ENCODE measurements at regions of chr2 and their contacts with region 1.

Region 1: GRCh38 chr2:65746931-65747675 is 314.7 kb upstream of the SPRED2 start:
- DNase-seq: peak; percentile 82
- H3K4me3 ChIP-seq: no peak overlapping the region
- H3K27ac ChIP-seq: peak overlapping the region; percentile 100
- H3K4me1 ChIP-seq: peaks cover 62% of the 10 kb centered on the region
- H3K27me3 ChIP-seq: no peaks in the 10 kb centered on the region
- CTCF ChIP-seq: no peak

Region 2: DNA sequence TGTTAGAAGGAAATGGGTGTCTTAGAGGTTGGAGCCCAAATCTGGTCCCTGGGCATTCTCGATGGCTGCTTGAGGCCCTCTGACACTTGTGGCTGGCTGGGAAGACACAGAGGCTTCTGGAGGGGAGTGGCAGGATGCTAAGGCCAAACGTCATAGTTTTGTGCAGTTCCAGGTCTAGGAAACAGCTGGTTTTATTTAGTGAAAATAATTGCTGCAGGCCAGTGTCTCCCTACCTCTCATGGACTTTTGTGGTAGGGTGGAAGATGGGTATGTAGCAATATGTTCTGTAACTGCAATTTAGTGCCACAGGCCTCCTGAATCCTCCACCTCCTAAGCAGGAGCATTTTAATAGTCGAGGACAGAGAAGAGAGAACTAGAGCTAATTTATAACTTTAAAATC is 282.5 kb before region 1 on chr2:
- CTCF ChIA-PET with region 1: no interaction called
- POLR2A ChIA-PET with region 1: no interaction called
- intact Hi-C with region 1: loop called (anchors 5 kb)
- DNase-seq: peak; percentile 68
- H3K4me3 ChIP-seq: no peak overlapping the region
- H3K27ac ChIP-seq: peak overlapping the region; percentile 71
- H3K4me1 ChIP-seq: peaks cover 31% of the 10 kb centered on the region
- H3K27me3 ChIP-seq: no peaks in the 10 kb centered on the region
- CTCF ChIP-seq: no peak

Region 3: DNA sequence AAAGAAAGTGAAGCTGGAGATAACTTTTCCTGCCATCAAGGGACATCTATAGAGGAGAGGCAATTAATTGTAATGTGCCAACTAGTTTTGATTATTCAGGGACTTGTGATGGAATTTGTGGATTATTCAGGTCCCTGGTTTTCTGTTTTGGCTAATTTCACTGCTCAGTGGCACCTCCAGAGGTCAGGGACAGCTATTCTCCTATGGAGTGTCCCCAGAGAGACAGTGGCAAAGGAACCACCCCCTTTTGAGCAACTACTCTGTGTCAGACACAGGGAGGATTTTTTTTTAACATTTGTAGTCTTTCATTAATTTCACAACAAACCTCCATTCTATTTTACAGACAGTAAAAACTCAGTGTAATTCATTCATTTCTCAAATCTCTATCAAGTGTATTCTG is 108.7 kb before region 1 on chr2:
- CTCF ChIA-PET with region 1: interaction called, 9 read pairs
- POLR2A ChIA-PET with region 1: interaction called, 5 read pairs
- intact Hi-C with region 1: loop called (anchors 1 kb)
- DNase-seq: peak; percentile 77
- H3K4me3 ChIP-seq: no peak overlapping the region
- H3K27ac ChIP-seq: peak overlapping the region; percentile 84
- H3K4me1 ChIP-seq: peaks cover 60% of the 10 kb centered on the region
- H3K27me3 ChIP-seq: no peaks in the 10 kb centered on the region
- CTCF ChIP-seq: peak; percentile 46

Region 4: GRCh38 chr2:65662654-65663432 is 84.3 kb before region 1 on chr2:
- CTCF ChIA-PET with region 1: no interaction called
- POLR2A ChIA-PET with region 1: no interaction called
- intact Hi-C with region 1: loop called (anchors 2 kb)
- DNase-seq: peak; percentile 94
- H3K4me3 ChIP-seq: peak overlapping the region; percentile 29
- H3K27ac ChIP-seq: peak overlapping the region; percentile 94
- H3K4me1 ChIP-seq: peaks cover 59% of the 10 kb centered on the region
- H3K27me3 ChIP-seq: no peaks in the 10 kb centered on the region
- CTCF ChIP-seq: no peak

Region 5: DNA sequence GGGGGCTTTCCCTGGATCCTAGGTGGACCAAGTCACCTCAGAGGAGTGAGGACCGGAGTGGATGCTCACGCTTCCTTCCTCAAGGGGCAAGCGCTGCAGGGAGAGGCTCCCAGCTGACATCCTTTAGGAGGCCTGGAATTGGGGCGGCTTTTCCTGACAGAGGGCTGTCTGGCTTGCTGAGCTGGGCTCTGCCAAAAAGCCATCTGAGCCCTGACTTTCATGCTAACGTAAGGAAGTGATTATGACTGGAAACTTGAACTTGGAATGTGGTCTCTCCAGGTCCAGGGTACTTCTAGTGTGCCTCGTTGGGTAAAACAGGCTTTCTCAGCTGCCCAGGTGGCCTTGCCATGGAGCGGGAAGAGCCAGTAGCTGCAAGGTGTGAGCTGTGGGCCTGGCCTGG is 46.4 kb before region 1 on chr2:
- CTCF ChIA-PET with region 1: no interaction called
- POLR2A ChIA-PET with region 1: no interaction called
- intact Hi-C with region 1: no loop called
- DNase-seq: no peak
- H3K4me3 ChIP-seq: no peak overlapping the region
- H3K27ac ChIP-seq: no peak overlapping the region
- H3K4me1 ChIP-seq: no peaks in the 10 kb centered on the region
- H3K27me3 ChIP-seq: no peaks in the 10 kb centered on the region
- CTCF ChIP-seq: no peak

Region 6: GRCh38 chr2:65799141-65799854 is 52.2 kb after region 1 on chr2:
- CTCF ChIA-PET with region 1: interaction called, 3 read pairs
- POLR2A ChIA-PET with region 1: interaction called, 8 read pairs
- intact Hi-C with region 1: loop called (anchors 1 kb)
- DNase-seq: no peak
- H3K4me3 ChIP-seq: no peak overlapping the region
- H3K27ac ChIP-seq: peak overlapping the region; percentile 12
- H3K4me1 ChIP-seq: peaks cover 43% of the 10 kb centered on the region
- H3K27me3 ChIP-seq: no peaks in the 10 kb centered on the region
- CTCF ChIP-seq: no peak

Region 7: DNA sequence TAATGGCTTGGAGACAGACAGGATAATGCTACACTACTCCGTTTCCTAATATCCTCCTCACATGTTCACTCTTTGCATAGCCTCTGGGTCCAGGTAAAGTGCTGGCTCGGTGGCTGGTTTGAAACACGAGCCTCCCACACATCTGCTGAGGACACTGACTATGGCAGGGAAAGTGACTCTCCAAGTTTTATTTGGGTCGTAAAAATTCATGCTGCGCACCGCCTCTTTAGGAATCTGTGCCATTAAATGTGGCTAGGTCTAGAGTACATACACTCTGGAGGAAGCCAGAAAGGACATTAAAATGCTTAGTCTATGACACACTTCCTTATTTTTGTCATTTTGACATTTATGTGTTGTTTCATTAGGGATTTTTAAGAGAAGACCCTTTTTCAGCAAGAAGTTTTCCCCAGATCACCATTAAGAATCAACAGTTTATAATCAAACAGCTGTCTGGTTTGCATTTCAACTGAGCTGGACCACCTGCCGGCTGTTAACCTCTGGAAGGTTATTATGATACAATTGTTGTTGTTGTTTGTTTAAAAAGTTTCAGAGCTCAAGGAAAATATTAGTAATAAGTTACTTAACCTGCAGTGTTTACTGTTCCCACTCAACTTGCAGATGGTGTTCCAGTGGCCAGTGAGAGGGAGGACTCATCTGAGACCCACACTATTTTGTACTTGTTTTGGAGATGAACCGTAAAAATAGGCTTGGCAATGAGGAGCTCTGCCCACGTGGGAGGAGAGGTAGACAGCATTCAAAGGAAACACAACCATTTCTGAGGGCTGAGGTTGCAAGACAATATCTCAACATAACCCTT is 244.5 kb after region 1 on chr2:
- CTCF ChIA-PET with region 1: no interaction called
- POLR2A ChIA-PET with region 1: interaction called, 3 read pairs
- intact Hi-C with region 1: loop called (anchors 2 kb)
- DNase-seq: peak; percentile 97
- H3K4me3 ChIP-seq: no peak overlapping the region
- H3K27ac ChIP-seq: peak overlapping the region; percentile 60
- H3K4me1 ChIP-seq: peaks cover 22% of the 10 kb centered on the region
- H3K27me3 ChIP-seq: peaks cover 8% of the 10 kb centered on the region
- CTCF ChIP-seq: no peak

Region 8: DNA sequence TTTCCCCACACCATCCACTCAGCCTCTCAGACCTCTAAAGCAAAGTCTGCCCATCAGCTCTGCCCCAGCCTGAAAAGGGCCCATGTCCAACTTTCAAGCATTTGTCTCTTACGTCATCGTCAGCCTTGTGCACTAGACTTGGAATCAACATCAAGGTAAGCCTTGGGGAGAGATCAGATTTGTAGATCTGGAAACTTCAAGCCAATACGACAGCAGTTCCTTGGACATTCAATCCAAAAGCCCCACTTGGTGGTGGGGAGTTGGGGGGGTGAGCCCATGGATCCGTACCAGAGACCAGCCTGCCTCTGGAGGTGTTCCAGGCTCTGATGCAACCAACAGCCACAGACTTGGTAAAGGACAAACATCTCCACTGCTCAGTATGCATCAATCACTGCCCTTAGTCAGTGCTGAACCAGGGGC is 481.0 kb after region 1 on chr2:
- CTCF ChIA-PET with region 1: no interaction called
- POLR2A ChIA-PET with region 1: interaction called, 20 read pairs
- intact Hi-C with region 1: no loop called
- DNase-seq: no peak
- H3K4me3 ChIP-seq: no peak overlapping the region
- H3K27ac ChIP-seq: no peak overlapping the region
- H3K4me1 ChIP-seq: no peaks in the 10 kb centered on the region
- H3K27me3 ChIP-seq: no peaks in the 10 kb centered on the region
- CTCF ChIP-seq: no peak